ENCODE measurements at regions of chr2 and their contacts with region 1.

Region 1: DNA sequence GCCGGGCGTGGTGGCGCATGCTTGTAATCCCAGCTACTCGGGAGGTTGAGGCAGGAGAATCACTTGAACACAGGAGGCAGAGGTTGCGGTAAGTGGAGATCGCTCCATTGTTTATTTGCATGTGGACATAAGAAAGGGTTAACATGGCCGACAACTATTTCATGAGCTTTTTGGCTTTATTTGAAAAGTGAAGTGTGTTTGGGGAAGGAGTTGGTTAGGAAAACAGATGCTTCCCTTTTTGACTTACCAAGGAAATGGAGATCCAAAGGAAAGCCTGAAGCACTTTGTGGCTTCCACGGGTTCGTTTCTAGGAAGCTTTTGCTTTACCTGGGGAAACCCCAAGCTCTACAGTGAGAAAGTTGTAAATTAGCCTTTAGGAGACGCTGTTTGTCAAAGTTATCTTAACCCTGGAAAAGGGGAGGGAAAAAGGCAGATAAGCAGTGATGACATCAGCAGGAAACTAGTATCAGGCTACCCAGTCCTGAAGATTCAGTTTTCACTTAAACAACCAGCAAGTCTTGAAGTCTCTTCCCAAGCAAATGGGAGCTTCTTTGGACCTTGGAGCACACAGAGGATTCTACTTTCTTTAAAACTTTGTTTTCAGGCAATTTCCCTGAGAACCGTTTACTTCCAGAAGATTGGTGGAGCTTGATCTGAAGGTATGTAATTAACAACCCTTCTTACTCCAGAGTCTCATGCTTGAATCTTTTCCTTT is at the start of gene CASP10:
- DNase-seq: no peak
- ATAC-seq: peak; percentile 66
- H3K4me3 Mint-ChIP-seq: peak within 1 kb of the TSS; percentile 86
- H3K27ac Mint-ChIP-seq: peak within 1 kb of the TSS; percentile 96
- H3K4me1 Mint-ChIP-seq: peaks cover 43% of the 10 kb centered on the region
- H3K27me3 Mint-ChIP-seq: no peaks in the 10 kb centered on the region
- total RNA-seq, gene CASP10: 12.2 to 16.8 TPM

Region 2: GRCh38 chr2:200405599-200406298 is 777.1 kb before region 1 on chr2:
- CTCF ChIA-PET with region 1: no interaction called
- POLR2A ChIA-PET with region 1: no interaction called
- intact Hi-C with region 1: no loop called
- DNase-seq: no peak
- ATAC-seq: peak; percentile 99
- H3K4me3 Mint-ChIP-seq: no peak overlapping the region
- H3K27ac Mint-ChIP-seq: peak overlapping the region; percentile 45
- H3K4me1 Mint-ChIP-seq: peaks cover 29% of the 10 kb centered on the region
- H3K27me3 Mint-ChIP-seq: no peaks in the 10 kb centered on the region

Region 3: DNA sequence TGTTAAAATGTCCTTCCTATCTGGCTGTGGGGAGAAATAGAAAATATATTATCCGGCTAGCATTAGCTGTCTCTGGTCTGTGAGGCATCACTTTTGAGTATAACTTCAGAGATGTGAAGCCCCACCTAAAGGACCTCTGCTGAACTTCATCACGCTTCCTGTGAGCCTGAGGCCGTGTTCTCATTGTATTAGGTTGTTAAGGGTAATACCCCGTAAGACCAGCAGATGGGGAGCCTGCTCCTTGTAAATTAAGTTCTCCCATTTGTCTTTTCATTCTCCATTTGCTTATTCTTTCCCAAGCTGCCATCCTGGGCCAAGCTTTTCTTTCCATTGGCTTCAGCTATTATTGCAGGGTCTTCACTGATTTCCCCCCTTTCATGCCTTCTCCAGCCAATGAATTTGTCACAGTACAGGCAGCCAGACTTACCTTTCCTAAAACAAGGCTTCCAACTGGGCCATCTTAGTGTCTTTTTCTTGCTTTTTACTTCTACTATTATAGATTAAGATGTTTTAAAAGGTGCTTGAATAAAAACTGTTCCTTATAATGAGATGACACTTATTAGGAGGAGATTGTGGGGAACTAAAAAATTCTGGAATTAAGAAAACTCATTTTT is 281.2 kb before region 1 on chr2:
- CTCF ChIA-PET with region 1: interaction called, 32 read pairs
- POLR2A ChIA-PET with region 1: interaction called, 3 read pairs
- intact Hi-C with region 1: no loop called
- DNase-seq: peak; percentile 83
- ATAC-seq: peak; percentile 100
- H3K4me3 Mint-ChIP-seq: no peak overlapping the region
- H3K27ac Mint-ChIP-seq: peak overlapping the region; percentile 73
- H3K4me1 Mint-ChIP-seq: peaks cover 2% of the 10 kb centered on the region
- H3K27me3 Mint-ChIP-seq: no peaks in the 10 kb centered on the region

Region 4: DNA sequence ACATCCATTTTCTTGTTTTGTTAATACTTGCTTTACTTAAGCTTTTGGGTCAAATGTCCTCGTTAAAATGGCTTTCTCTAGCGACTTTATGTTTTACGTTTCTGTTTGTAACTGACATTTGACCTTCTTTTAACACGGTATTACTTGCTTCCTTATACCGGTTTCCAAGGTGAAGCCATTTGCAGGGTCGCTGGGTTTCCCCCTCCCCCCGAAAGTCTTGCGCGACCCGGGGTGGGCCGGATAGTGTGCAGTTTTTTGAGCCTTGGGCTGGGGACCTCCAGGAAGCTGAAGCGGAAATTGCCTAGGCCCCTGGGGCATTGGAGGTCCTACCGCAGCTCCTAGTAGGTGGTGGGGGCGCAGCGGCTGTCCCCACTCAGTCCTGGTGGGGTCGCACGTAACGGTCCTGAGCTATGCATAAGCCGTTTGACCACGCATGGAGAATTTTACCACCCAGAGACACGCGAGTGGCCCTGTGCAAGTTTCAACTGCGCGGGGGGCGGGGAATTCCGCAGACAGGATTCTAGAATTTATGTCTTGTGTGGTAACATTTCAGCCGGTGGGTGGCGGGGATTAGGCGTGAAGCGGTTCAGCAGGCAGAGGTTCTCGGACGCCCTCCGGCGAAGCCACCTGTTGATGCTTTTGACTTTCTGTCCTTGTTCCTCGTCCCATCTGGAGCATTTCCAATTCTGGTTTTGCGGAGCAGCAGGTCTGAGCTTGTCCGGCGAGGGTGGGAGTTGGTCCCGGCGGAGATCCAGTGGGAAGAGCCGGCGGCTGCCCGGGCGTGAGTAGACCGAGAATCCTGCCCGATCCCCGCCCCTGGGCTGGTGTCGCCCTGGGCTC is 64.5 kb before region 1 on chr2:
- CTCF ChIA-PET with region 1: interaction called, 9 read pairs
- POLR2A ChIA-PET with region 1: interaction called, 4 read pairs
- intact Hi-C with region 1: loop called in 1 of 2 experiments (anchors 5 kb)
- DNase-seq: peak; percentile 94
- ATAC-seq: peak; percentile 37
- H3K4me3 Mint-ChIP-seq: peak overlapping the region; percentile 98
- H3K27ac Mint-ChIP-seq: peak overlapping the region; percentile 100
- H3K4me1 Mint-ChIP-seq: peaks cover 42% of the 10 kb centered on the region
- H3K27me3 Mint-ChIP-seq: no peaks in the 10 kb centered on the region

Region 5: DNA sequence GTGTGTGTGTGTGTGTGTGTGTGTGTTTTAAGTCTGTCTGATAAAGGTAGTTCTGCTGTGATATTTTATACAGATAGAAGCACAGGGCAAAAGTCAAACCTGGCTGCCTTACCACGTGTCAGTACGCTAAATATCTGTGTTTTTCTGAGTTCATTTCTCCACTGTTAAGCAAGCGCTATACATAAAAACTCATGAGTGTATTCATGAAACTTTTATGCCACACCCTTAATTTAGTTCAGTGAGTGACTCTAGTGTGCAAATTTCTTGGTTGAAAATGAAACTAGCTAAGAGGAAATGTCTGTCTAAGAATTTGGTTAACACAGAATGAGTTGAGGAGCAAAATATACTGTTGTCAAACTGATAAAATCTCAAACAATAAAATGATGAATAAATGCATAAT is 11.3 kb after region 1 on chr2:
- CTCF ChIA-PET with region 1: interaction called, 15 read pairs
- POLR2A ChIA-PET with region 1: interaction called, 3 read pairs
- intact Hi-C with region 1: loop called (anchors 1 kb)
- DNase-seq: no peak
- ATAC-seq: peak; percentile 91
- H3K4me3 Mint-ChIP-seq: peak overlapping the region; percentile 5
- H3K27ac Mint-ChIP-seq: no peak overlapping the region
- H3K4me1 Mint-ChIP-seq: peaks cover 65% of the 10 kb centered on the region
- H3K27me3 Mint-ChIP-seq: no peaks in the 10 kb centered on the region

Region 6: DNA sequence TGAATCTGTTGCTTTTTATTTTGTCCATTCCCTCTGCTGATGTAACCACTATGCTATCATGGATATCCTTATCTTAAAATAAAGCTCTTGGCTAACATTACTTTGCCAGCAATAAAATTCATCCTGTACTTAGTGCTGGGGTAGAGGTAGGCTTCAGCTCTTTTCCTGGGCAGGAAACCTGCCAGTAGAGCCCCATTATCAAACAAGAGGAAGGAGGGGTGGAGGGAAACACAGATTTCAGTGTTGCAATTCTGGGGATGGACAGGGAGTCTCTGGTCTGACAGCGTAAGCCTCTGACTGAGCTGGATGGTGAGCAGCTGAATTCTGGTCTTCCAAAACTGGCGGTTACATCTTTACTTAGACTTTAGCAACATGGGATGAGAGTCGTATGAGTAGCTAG is 125.1 kb after region 1 on chr2:
- CTCF ChIA-PET with region 1: no interaction called
- POLR2A ChIA-PET with region 1: no interaction called
- intact Hi-C with region 1: no loop called
- DNase-seq: no peak
- ATAC-seq: no peak
- H3K4me3 Mint-ChIP-seq: no peak overlapping the region
- H3K27ac Mint-ChIP-seq: no peak overlapping the region
- H3K4me1 Mint-ChIP-seq: no peaks in the 10 kb centered on the region
- H3K27me3 Mint-ChIP-seq: no peaks in the 10 kb centered on the region

Region 7: DNA sequence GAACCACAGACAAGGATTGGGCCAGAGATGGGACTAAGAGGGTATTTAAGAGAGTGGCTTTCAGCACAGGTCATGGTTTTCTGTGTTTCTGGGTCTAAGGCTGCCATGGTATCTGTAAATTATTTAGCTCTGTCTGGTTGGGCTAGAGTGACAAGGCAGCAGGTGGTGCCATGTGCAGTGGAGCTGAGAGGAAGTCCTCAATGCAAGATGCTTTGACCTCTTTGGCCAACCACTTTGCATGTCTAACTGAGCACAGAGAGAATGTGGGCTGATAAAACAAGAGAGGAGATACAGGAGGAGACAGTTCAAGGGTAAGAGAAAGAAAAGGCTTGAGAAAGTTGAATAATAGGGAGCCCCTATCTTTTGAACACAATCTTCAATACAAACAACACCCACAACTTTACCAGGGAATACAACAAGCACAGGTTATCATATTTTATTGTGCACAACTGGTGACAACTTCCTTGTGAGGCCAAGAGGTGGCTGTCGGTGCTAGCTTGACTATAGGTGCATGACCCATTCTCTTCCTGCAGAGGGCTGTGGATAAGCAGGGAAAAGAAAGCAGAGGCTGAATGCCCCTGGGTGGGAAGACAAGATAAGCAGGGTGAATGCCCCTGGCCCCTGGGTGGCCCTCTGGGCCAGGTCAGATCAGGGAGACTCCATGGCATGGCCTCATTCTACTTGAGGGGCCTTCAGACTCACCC is 162.0 kb after region 1 on chr2:
- CTCF ChIA-PET with region 1: no interaction called
- POLR2A ChIA-PET with region 1: no interaction called
- intact Hi-C with region 1: no loop called
- DNase-seq: no peak
- ATAC-seq: no peak
- H3K4me3 Mint-ChIP-seq: no peak overlapping the region
- H3K27ac Mint-ChIP-seq: no peak overlapping the region
- H3K4me1 Mint-ChIP-seq: peaks cover 8% of the 10 kb centered on the region
- H3K27me3 Mint-ChIP-seq: no peaks in the 10 kb centered on the region

Region 8: DNA sequence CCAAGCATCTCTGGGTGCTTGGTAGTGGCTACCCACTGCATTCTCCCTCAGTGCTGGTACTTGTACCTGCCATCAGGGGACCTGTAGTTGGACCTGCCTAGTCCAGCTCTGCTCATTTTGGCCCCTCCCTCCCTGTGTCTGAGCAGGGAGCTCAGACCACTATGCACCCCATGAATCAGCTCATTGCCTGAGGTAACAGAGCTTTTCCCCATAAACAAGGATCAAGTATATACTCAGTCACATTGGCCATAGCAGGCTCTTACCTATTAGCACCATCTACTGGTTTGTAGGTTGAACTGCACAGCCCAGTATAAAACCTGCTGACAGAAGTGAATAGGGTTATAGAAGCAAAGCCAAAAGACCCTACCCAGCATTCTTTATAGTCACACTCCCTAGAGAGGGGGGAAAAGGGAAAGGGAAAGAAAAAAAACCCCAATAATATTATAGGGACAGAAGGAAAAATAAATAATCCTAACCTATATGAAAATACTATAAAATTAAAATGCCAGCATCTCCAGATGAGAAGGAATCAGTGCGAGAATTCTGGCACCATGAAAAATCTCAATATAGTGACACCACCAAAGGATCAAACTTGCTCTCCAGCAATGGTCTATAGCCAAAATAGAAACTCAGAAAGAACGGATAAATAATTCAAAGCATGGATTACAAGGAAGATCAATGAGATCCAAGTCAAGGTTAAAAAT is 181.2 kb after region 1 on chr2:
- CTCF ChIA-PET with region 1: interaction called, 13 read pairs
- POLR2A ChIA-PET with region 1: no interaction called
- intact Hi-C with region 1: loop called (anchors 2 kb)
- DNase-seq: peak; percentile 27
- ATAC-seq: peak; percentile 91
- H3K4me3 Mint-ChIP-seq: no peak overlapping the region
- H3K27ac Mint-ChIP-seq: peak overlapping the region; percentile 44
- H3K4me1 Mint-ChIP-seq: peaks cover 34% of the 10 kb centered on the region
- H3K27me3 Mint-ChIP-seq: no peaks in the 10 kb centered on the region

Region 9: DNA sequence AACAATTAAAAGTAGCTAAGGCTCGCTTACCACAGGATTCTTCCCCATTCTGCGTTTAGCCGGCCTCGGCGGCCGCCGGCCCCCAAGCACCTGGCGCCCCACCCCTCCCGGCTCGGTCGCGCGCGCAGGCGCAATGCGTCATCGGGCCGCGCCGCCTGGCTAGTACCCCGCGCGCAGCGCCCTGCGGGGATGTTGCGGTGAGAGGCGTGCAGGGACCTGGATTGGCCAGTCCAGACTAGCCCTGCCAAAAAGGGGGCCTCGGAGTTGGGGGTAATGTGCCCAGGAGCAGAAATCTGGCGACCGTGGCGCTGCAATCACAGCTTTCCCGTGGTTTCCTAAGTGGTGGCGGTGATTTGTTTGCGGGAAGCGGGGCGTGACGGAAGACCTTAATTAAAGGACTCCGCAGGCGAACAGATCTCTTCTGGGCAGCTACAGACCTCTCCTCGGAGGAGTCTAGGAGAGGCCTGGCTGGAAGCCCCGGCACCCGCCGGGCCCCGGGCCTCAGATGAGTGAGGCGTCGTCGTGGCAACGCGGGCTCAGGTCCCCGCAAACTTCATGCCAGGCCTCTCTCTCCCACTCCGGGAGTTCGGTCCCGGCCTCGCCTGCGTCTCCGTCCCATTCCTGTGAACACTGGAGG is 459.9 kb after region 1 on chr2:
- CTCF ChIA-PET with region 1: no interaction called
- POLR2A ChIA-PET with region 1: no interaction called
- intact Hi-C with region 1: loop called in 1 of 2 experiments (anchors 5 kb)
- DNase-seq: peak; percentile 91
- ATAC-seq: peak; percentile 82
- H3K4me3 Mint-ChIP-seq: peak overlapping the region; percentile 79
- H3K27ac Mint-ChIP-seq: peak overlapping the region; percentile 84
- H3K4me1 Mint-ChIP-seq: peaks cover 9% of the 10 kb centered on the region
- H3K27me3 Mint-ChIP-seq: no peaks in the 10 kb centered on the region

Measured in activated CD4-positive, alpha-beta T cell treated with anti-CD3 and anti-CD28 coated beads for 36 hours (primary cell).